Kidney (tissue), 22 donors: ENCODE measurements at regions of chr12 and their contacts with region 1.

Region 1: GRCh38 chr12:53427905-53428594 is 4.4 kb downstream of the AMHR2 start:
- DNase-seq: peak in 1 of 5 donors; percentile 15
- H3K4me3 ChIP-seq: no peak overlapping the region
- H3K27ac ChIP-seq: no peak overlapping the region
- H3K4me1 ChIP-seq: no peaks in the 10 kb centered on the region
- H3K27me3 ChIP-seq: no peaks in the 10 kb centered on the region
- CTCF ChIP-seq: no peak

Region 2: DNA sequence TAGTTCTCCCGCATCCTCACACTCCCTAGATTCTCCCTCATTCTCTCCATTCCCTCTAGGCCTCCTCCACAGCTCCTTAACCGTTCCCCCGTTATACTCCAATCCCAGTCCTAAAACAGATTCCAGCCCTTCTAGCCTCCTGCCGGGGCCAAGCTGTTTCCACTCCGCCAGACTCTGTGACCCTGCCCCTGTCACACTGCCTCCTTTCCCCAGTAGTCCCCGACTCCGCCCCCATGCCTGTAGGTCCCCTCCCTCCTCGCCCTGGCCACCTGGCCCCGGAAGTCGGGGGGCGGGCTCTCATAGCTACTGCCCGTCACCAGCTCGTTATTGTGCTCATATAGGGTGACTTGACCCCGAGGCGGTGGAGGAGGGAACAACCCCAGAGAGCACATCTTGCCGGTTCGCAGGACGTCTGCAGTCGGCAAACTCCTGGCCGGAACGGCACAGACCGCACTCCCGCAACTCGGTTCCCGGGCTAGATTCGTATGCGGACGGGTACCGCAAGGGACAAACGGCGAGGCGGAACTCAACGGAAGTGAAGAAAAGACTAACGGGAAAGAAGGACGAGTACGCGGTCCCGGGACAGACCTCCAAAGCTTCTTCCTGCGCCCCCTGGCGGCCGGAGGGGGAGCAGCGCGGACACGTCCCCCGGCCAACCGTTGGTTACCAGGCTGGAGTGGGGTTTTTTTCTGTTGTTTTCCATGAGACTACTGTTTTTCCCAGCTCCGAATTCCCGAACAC is 106.8 kb before region 1 on chr12 and contains the start of gene AAAS:
- intact Hi-C with region 1: no loop called
- DNase-seq: peak; percentile 97 to 99 (median 98)
- H3K4me3 ChIP-seq: peak within 1 kb of the TSS; percentile 89 to 98 (median 91)
- H3K27ac ChIP-seq: peak within 1 kb of the TSS; percentile 89 to 96
- H3K4me1 ChIP-seq: peaks cover 3 to 21% (median 13%) of the 10 kb centered on the region in 3 donors
- H3K27me3 ChIP-seq: no peaks in the 10 kb centered on the region
- CTCF ChIP-seq: peak; percentile 96
- total RNA-seq, gene AAAS: 46.2 TPM

Region 3: DNA sequence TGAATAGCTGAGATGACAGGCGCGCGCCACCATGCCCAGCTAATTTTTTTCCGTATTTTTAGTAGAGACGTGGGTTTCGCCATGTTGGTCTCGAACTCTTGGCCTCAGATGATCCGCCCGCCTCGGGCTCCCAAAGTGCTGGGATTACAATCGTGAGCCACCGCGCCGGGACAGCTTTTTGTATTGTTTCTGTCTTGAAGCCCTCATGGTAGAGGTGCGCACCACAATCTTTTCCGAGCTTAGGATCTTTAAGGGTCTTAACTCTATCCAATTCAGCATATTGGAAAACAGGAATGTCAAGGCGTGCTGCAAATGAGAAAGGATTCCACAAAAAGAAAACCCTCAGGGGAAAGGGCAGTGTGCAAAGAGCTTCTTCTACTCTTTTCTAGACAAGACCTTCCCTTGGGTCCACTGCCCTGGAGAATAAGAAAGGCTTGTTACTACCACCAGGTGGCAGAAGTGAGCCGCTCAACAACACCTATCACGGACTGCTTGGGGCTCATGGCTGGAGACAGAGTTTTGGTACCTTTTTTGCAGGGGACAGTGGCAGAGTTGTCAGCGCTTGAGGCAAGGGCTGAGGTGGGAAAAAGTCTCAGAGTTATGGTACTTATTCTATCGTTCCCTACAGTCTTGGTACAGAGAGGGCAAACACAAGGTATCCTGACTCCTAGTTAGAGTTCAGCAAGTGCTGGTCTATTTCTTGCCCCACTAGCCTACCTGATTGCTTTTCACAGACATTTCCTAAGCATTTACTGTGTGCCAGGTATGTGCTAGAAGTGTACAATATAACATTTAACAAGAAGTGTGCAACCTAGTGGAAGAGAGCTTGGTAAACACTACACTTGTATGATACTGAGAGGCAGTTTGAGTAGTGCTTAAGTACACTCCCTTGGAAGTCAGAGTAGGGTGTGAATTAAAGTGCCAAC is 75.5 kb before region 1 on chr12:
- intact Hi-C with region 1: loop called (anchors 10 kb)
- DNase-seq: peak; percentile 82 to 95 (median 90)
- H3K4me3 ChIP-seq: no peak overlapping the region
- H3K27ac ChIP-seq: no peak overlapping the region
- H3K4me1 ChIP-seq: peaks cover 0 to 5% (median 0%) of the 10 kb centered on the region in 3 donors
- H3K27me3 ChIP-seq: no peaks in the 10 kb centered on the region
- CTCF ChIP-seq: peak; percentile 94